ENCODE measurements at regions of chr3 and their contacts with region 1.

Region 1: GRCh38 chr3:58585005-58585786 is 8.0 kb upstream of the FAM107A start:
- DNase-seq: peak; percentile 90
- ATAC-seq: peak; percentile 82
- H3K4me3 Mint-ChIP-seq: peak overlapping the region; percentile 63
- H3K27ac Mint-ChIP-seq: no peak overlapping the region
- H3K4me1 Mint-ChIP-seq: peaks cover 40% of the 10 kb centered on the region
- H3K27me3 Mint-ChIP-seq: peaks cover 47% of the 10 kb centered on the region
- CTCF ChIP-seq: peak; percentile 56

Region 2: DNA sequence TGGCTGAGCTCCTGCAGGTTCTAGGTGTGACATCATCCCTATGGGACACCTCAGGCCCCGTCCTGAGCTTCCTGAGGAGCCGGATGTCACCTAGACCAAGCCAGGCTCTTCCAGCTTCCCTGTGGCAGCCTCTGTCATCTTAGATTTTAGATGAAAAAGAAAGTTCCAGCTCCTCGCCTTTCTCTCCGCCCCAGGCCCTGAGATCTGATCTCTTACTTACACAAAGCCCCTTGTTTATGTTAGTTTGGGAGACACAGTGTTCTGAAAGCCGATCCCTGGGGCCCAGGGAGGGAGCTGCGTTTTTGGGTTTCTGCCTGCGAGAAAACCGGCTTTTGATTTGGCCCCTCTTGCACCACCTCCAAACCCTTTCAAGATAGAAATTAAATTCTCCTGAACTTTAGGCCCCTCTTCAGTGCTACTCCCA is 32.2 kb after region 1 on chr3:
- CTCF ChIA-PET with region 1: interaction called, 12 read pairs
- POLR2A ChIA-PET with region 1: no interaction called
- DNase-seq: no peak
- ATAC-seq: peak; percentile 24
- H3K4me3 Mint-ChIP-seq: no peak overlapping the region
- H3K27ac Mint-ChIP-seq: no peak overlapping the region
- H3K4me1 Mint-ChIP-seq: peaks cover 10% of the 10 kb centered on the region
- H3K27me3 Mint-ChIP-seq: no peaks in the 10 kb centered on the region
- CTCF ChIP-seq: no peak

Region 3: DNA sequence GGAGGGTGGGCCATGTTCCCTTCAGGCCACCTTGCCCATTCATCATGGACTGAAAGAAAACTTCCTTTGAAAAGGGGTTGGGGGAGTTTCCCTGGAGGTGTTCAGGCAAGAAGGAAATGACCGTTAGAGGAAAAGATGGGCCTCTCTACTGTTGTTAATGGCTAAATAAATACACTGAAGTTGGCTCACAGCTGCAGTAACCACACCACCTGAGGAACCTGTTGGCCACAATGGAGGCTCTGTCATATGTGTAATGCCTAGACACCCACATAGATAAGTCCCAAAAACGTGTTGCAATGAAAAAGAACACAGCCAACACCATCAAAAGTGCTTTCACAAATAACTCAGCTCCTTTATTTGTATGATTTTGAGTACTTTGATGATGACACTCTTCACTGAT is 119.5 kb after region 1 on chr3:
- CTCF ChIA-PET with region 1: no interaction called
- POLR2A ChIA-PET with region 1: no interaction called
- DNase-seq: no peak
- ATAC-seq: no peak
- H3K4me3 Mint-ChIP-seq: no peak overlapping the region
- H3K27ac Mint-ChIP-seq: no peak overlapping the region
- H3K4me1 Mint-ChIP-seq: no peaks in the 10 kb centered on the region
- H3K27me3 Mint-ChIP-seq: no peaks in the 10 kb centered on the region
- CTCF ChIP-seq: no peak

Measured in WTC11 (cell line).